AG04450 (cell line): ENCODE measurements at regions of chr7 and their contacts with region 1.

Region 1: DNA sequence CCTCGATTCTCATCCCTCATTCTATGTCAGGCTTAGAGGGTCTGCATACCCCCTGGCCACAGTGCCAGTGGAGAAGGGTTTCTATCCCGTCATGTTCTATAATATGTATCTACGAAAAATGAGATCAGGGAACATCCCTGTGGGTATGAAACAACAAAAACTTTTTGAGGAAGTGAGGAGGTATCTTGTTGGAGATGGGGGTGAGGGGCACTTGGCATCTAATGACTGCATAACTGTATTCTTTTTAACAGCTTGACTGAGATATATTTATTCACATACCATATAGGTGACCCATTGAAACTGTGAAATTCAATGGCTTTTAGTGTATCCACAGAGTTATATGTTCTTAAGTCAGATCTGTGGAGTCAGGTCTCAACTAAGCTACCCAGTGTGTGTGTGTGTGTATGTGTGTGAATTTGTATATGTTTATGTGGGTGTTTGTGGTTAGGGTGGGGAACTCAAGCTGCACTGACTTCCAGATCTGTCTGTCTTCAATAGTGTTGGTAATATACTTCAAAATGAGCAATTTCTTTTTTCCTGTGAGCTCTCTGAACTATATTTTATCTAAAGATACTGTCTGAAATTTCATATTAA is 528.9 kb downstream of the CNTNAP2 start:
- DNase-seq: no peak
- H3K4me3 ChIP-seq: no peak overlapping the region
- H3K27ac ChIP-seq: no peak overlapping the region
- H3K27me3 ChIP-seq: no peaks in the 10 kb centered on the region
- CTCF ChIP-seq: no peak

Region 2: GRCh38 chr7:146008293-146008692 is 637.2 kb before region 1 on chr7:
- CTCF ChIA-PET with region 1: no interaction called
- POLR2A ChIA-PET with region 1: interaction called, 13 read pairs
- DNase-seq: no peak
- H3K4me3 ChIP-seq: no peak overlapping the region
- H3K27ac ChIP-seq: no peak overlapping the region
- H3K27me3 ChIP-seq: no peaks in the 10 kb centered on the region
- CTCF ChIP-seq: no peak